ENCODE measurements at regions of chr2 and their contacts with region 1.

Region 1: GRCh38 chr2:10297959-10298531 is 4.7 kb upstream of the HPCAL1 start:
- DNase-seq: peak; percentile 47 to 48
- H3K4me3 ChIP-seq: no peak overlapping the region
- H3K27ac ChIP-seq: peak overlapping the region in 4 of 5 donors; percentile 46 to 69 (median 58)
- H3K4me1 ChIP-seq: peaks cover 7 to 25% (median 14%) of the 10 kb centered on the region in 4 donors
- H3K27me3 ChIP-seq: no peaks in the 10 kb centered on the region
- CTCF ChIP-seq: no peak
- EP300 ChIP-seq: no peak
- POLR2A ChIP-seq: no peak

Region 2: DNA sequence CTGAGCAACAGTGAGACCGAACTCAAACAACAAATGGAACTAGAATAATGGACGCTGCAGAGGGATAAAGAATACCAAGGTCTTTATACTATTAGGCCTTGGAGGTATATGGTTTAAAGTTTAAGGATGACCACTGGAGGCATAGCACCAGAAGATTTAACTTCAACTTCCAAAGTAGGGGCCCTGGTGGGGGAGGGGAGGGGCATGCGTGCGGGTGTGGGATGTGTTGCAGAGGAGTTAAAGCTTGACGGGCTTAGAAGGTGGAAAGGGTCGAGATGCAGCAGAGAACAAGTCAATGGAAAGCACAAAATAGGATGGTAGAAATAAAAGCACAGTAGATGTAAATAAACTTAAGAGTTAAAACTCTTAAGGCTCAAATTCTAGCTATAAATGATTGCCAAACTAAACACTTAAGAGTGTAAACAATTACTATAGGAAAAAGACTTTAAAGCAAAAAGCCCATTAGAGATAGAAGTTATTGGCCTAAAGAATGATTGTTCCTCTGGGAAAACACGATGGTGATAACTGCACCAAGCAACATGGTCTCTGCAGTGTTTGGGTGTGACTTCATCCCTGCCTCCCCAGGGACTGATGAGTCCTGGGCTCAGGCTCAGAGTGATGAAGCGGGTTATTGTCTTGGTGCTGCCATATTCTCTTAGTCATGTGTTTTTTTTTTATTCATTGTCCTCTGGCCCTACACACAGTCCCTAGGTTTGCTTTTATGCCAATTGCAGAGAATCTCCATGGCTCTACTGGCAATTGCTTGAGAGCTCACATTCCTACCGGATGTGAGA is 162.6 kb before region 1 on chr2:
- intact Hi-C with region 1: loop called (anchors 10 kb)
- DNase-seq: no peak
- H3K4me3 ChIP-seq: no peak overlapping the region
- H3K27ac ChIP-seq: no peak overlapping the region
- H3K4me1 ChIP-seq: no peaks in the 10 kb centered on the region
- H3K27me3 ChIP-seq: no peaks in the 10 kb centered on the region
- CTCF ChIP-seq: no peak
- EP300 ChIP-seq: no peak
- POLR2A ChIP-seq: no peak

Measured in stomach (tissue), 19 donors.